ENCODE measurements at regions of chr3 and their contacts with region 1.

Region 1: GRCh38 chr3:123476967-123477750 is 28.3 kb upstream of the ADCY5 start:
- DNase-seq: no peak
- ATAC-seq: no peak
- H3K4me3 ChIP-seq: no peak overlapping the region
- H3K27ac ChIP-seq: no peak overlapping the region
- H3K4me1 ChIP-seq: no peaks in the 10 kb centered on the region
- H3K27me3 ChIP-seq: peaks cover 0 to 2% of the 10 kb centered on the region in 2 experiments; a peak in 1 of 4 replicates
- CTCF ChIP-seq: no peak
- EP300 ChIP-seq: no peak
- POLR2A ChIP-seq: no peak
- RAD21 ChIP-seq: no peak

Region 2: DNA sequence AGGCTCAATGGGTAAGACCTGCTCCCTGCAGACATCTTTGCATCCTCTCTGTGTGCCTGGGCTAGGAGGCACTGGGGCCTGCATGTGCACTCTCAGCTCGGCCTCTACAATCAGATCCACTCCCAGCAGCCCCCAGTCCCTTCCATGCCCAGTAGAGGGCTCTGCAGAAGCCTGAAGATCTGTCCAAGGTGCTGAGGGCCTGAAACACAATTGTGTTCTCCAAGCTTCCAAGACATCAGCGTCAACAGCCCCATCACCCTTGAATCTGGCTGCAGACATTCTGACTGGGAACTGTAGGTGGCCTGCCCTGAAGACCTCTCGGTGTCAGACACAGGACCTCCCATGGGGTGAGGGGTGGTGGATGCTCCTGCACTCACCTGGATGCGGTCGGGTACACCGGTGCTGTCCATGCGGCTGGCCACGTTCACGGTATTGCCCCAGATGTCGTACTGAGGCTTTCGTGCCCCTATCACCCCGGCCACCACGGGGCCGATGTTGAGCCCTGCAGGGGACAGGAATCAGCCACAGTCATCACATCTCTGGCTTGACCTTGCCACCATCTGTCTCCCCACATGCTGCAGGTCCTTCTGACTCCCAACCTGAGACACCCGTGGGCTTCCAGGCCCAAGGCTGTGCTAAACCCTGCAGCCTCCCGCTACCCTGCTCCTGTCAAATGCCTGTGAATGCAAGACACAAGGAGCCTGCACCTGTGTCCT is 190.7 kb before region 1 on chr3:
- CTCF ChIA-PET with region 1: no interaction called
- POLR2A ChIA-PET with region 1: no interaction called
- RAD21 ChIA-PET with region 1: no interaction called
- SMC1A ChIA-PET with region 1: no interaction called
- in situ Hi-C with region 1: no loop called
- intact Hi-C with region 1: no loop called
- DNase-seq: no peak
- ATAC-seq: peak; percentile 98
- H3K4me3 ChIP-seq: no peak overlapping the region
- H3K27ac ChIP-seq: no peak overlapping the region
- H3K4me1 ChIP-seq: no peaks in the 10 kb centered on the region
- H3K27me3 ChIP-seq: no peaks in the 10 kb centered on the region; a peak in 1 of 4 replicates
- CTCF ChIP-seq: peak; percentile 75 to 90 (median 87)
- EP300 ChIP-seq: no peak
- POLR2A ChIP-seq: no peak
- RAD21 ChIP-seq: peak; percentile 48

Region 3: GRCh38 chr3:123421353-123422174 is 55.6 kb before region 1 on chr3:
- CTCF ChIA-PET with region 1: no interaction called
- POLR2A ChIA-PET with region 1: no interaction called
- RAD21 ChIA-PET with region 1: no interaction called
- SMC1A ChIA-PET with region 1: no interaction called
- in situ Hi-C with region 1: no loop called
- intact Hi-C with region 1: loop called (anchors 1 kb)
- DNase-seq: no peak
- ATAC-seq: peak; percentile 31; the same call in 2 of the 3 replicates
- H3K4me3 ChIP-seq: no peak overlapping the region
- H3K27ac ChIP-seq: no peak overlapping the region
- H3K4me1 ChIP-seq: no peaks in the 10 kb centered on the region
- H3K27me3 ChIP-seq: peaks cover 0 to 3% of the 10 kb centered on the region in 2 experiments; a peak in 2 of 4 replicates
- CTCF ChIP-seq: no peak
- EP300 ChIP-seq: no peak
- POLR2A ChIP-seq: no peak
- RAD21 ChIP-seq: no peak

Region 4: DNA sequence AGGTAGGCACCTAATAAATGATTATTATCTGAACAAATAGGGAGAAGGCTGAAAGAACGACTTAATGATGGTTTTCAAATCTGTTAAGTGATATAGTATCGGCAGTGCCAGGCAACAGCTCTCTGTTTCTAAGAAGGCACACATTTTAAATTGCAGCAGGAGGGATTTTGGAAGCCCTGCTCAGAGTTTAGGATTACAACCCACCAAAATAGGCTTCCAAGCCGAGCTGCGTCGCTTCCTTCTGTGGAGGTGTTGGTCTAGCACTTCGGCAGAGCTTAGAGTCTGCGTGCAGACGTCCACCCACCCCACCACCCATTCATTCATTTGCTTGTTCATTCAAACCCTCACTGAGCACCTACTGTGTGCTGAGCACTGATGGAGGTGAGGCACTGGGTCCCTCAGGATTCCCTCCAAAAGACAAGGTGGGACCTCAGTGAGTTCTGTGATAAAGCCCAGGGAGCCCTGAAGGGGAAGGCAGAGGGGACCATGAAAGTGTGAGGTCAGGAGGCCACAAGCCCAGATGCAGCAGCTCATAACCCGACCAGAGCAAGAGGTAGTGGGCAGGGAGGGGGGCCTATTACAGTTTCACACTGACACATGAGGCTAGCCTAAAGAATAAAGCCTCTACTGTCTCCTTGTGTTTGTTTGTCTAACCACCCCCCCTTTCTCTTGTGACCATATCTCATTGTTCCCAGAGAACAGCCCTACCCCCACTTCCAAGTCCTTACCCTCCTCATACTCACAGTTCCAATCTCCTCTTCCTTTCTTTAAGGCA is 37.2 kb before region 1 on chr3:
- CTCF ChIA-PET with region 1: no interaction called
- POLR2A ChIA-PET with region 1: no interaction called
- RAD21 ChIA-PET with region 1: no interaction called
- SMC1A ChIA-PET with region 1: no interaction called
- in situ Hi-C with region 1: no loop called
- intact Hi-C with region 1: no loop called
- DNase-seq: no peak
- ATAC-seq: no peak
- H3K4me3 ChIP-seq: no peak overlapping the region
- H3K27ac ChIP-seq: no peak overlapping the region
- H3K4me1 ChIP-seq: no peaks in the 10 kb centered on the region
- H3K27me3 ChIP-seq: peaks cover 0 to 5% of the 10 kb centered on the region in 2 experiments; a peak in 1 of 4 replicates
- CTCF ChIP-seq: no peak
- EP300 ChIP-seq: no peak
- POLR2A ChIP-seq: no peak
- RAD21 ChIP-seq: no peak

Region 5: DNA sequence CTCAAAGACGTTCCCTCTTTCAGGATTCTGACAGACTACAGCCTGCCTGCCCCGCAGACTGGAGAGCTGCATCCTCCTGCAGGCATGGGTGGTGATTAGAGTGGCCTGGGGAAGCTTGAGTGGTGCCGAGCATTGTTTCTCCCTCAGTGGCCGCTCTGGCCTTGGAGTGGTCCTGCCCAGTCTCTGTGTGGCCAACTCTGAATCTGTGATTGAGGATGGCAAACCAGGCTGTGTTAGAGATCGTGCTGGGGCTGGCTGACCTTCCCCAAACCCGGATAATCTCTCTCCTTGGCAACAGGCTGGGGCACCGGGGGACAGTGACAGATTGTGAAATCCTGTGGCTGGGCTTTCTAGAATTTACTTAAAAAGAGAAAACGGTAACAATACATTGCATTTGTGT is 17.3 kb before region 1 on chr3:
- CTCF ChIA-PET with region 1: no interaction called
- POLR2A ChIA-PET with region 1: no interaction called
- RAD21 ChIA-PET with region 1: no interaction called
- SMC1A ChIA-PET with region 1: no interaction called
- in situ Hi-C with region 1: no loop called
- intact Hi-C with region 1: no loop called
- DNase-seq: no peak
- ATAC-seq: no peak
- H3K4me3 ChIP-seq: no peak overlapping the region
- H3K27ac ChIP-seq: no peak overlapping the region
- H3K4me1 ChIP-seq: no peaks in the 10 kb centered on the region
- H3K27me3 ChIP-seq: peaks cover 0 to 2% of the 10 kb centered on the region in 2 experiments; a peak in 3 of 4 replicates
- CTCF ChIP-seq: no peak
- EP300 ChIP-seq: no peak
- POLR2A ChIP-seq: no peak
- RAD21 ChIP-seq: no peak